H1 (cell line): ENCODE measurements at regions of chr17 and their contacts with region 1.

Region 1: GRCh38 chr17:49763735-49764558 is at the start of gene FAM117A:
- DNase-seq: peak; percentile 91 to 98
- H3K4me3 ChIP-seq: peak within 1 kb of the TSS; percentile 68 to 99 (median 80)
- H3K27ac ChIP-seq: peak within 1 kb of the TSS; percentile 21
- H3K4me1 ChIP-seq: peaks cover 0 to 18% (median 3%) of the 10 kb centered on the region in 4 experiments; a peak in 5 of 7 replicates
- H3K27me3 ChIP-seq: no peaks in the 10 kb centered on the region
- CTCF ChIP-seq: peak in 1 of 3 experiments; percentile 3; a peak in 1 of 4 replicates
- EP300 ChIP-seq: no peak
- POLR2A ChIP-seq: peak; percentile 83 to 89
- RAD21 ChIP-seq: no peak
- total RNA-seq, gene FAM117A: 25.3 and 28.4 TPM in 2 replicates

Region 2: DNA sequence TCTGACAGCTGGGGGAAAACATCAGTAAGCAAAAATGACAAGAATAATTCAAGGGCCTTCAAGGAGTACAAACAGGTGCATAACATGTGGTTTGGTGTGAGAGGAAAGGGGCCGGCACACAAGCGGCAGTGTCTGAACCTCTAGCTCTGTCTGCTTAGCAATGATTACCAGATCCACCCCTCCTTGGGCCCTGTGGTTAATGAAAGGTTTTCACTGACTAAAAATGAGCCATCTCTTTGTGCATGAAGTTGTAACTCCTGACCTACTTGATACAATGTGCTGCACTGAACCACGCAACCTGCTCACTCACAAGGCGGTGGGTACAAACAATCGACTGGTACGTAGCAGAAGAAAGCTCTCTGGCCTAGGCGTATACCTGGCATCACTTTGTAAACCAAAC is 15.2 kb before region 1 on chr17:
- CTCF ChIA-PET with region 1: interaction called, 10 read pairs
- POLR2A ChIA-PET with region 1: interaction called, 56 read pairs
- DNase-seq: no peak
- H3K4me3 ChIP-seq: no peak overlapping the region
- H3K27ac ChIP-seq: no peak overlapping the region
- H3K4me1 ChIP-seq: peaks cover 0 to 2% (median 0%) of the 10 kb centered on the region in 4 experiments; a peak in 2 of 7 replicates
- H3K27me3 ChIP-seq: no peaks in the 10 kb centered on the region
- CTCF ChIP-seq: no peak
- EP300 ChIP-seq: no peak
- POLR2A ChIP-seq: no peak
- RAD21 ChIP-seq: no peak

Region 3: DNA sequence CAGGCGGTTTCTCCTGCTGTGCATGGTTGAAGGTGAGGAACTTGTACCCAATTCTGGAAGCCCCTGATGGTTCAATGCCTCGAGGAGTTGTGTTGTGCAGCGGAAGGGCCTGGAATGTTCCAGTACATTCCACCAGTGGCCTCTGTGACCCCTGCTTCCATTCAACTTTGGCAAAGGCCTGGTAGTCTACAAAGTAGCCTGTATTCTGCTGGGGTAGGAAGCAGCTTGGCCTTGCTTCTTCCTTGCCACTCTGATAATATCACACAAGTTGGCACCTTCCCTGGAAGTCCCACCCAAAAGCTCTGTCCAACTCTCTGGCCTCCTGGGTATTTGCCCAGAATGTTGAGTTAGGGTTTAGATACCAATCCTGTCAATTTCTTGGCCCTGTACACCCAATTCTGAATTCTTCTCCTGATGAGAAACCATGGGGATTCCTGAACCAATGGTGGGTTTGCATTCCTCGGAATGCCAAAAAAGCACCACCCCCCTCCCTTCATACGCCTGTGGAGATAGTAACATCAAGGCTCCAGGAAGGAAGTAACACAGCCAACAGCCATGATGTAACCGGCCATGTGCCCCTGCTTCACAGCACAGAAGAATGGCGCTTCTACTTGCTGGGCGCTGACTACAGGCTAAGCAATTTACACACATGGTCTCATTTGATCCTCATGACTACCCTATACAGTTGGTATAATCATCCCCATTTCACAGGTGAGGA is 11.8 kb after region 1 on chr17:
- CTCF ChIA-PET with region 1: interaction called, 12 read pairs
- POLR2A ChIA-PET with region 1: interaction called, 59 read pairs
- DNase-seq: no peak
- H3K4me3 ChIP-seq: no peak overlapping the region
- H3K27ac ChIP-seq: no peak overlapping the region
- H3K4me1 ChIP-seq: peaks cover 0 to 3% (median 0%) of the 10 kb centered on the region in 4 experiments; a peak in 2 of 7 replicates
- H3K27me3 ChIP-seq: no peaks in the 10 kb centered on the region
- CTCF ChIP-seq: no peak
- EP300 ChIP-seq: no peak
- POLR2A ChIP-seq: no peak
- RAD21 ChIP-seq: no peak

Region 4: GRCh38 chr17:49783071-49783715 is 19.2 kb after region 1 on chr17:
- CTCF ChIA-PET with region 1: interaction called, 12 read pairs
- POLR2A ChIA-PET with region 1: interaction called, 37 read pairs
- DNase-seq: no peak
- H3K4me3 ChIP-seq: no peak overlapping the region
- H3K27ac ChIP-seq: no peak overlapping the region
- H3K4me1 ChIP-seq: 0 out of 7 replicates have a peak, but pooled peaks cover 0 to 4% (median 0%) of the 10 kb centered on the region in 4 experiments
- H3K27me3 ChIP-seq: peaks cover 0 to 3% (median 0%) of the 10 kb centered on the region in 4 experiments; a peak in 2 of 7 replicates
- CTCF ChIP-seq: no peak
- EP300 ChIP-seq: no peak
- POLR2A ChIP-seq: no peak
- RAD21 ChIP-seq: no peak

Region 5: DNA sequence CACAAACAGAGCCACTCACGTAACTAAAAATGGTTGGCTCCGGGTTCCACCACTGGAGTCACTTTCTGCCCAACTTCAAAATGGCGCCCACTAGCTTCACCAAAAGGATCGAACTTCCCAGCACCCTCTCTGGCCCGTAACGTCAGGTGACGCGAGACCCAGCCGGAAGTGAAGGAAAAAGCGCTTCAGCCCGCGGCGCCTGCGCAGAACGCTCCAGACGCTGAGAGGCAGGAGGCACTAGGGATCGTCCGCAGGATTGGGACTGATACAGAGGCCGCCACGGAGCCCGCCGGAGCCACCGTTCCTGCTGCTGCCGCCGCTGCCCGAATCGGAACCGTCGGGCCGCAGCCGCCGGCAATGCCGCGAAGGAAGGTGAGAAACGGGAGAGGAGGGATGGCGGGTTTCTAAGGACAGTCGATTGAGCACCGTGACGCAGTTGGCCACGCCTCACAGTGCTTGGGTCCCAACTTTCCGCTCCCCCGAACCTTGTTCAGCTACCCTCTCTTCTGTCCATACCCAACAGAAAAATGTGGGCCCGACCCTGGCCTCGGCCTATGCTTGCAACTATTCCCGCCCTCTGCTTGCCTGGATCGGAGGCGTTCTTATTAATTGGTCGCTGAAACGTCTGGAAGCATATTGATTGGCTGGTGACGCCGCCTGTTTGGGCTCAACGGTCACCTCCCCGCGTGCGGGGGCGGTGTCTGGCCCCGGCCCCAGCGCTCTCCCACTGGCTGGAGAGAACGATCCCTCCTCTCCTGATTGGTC is 24.7 kb after region 1 on chr17 and contains the start of gene KAT7:
- CTCF ChIA-PET with region 1: interaction called, 3 read pairs
- POLR2A ChIA-PET with region 1: interaction called, 37 read pairs
- DNase-seq: peak; percentile 97
- H3K4me3 ChIP-seq: peak within 1 kb of the TSS; percentile 96 to 100 (median 99)
- H3K27ac ChIP-seq: peak within 1 kb of the TSS; percentile 99
- H3K4me1 ChIP-seq: peaks cover 0 to 10% (median 1%) of the 10 kb centered on the region in 4 experiments; a peak in 3 of 7 replicates
- H3K27me3 ChIP-seq: peaks cover 0 to 3% (median 0%) of the 10 kb centered on the region in 4 experiments; a peak in 2 of 7 replicates
- CTCF ChIP-seq: no peak
- EP300 ChIP-seq: no peak
- POLR2A ChIP-seq: peak; percentile 95 to 97
- RAD21 ChIP-seq: no peak
- total RNA-seq, gene KAT7: 138 and 139 TPM in 2 replicates